Endothelial cell of umbilical vein (primary cell): ENCODE measurements at regions of chr13 and their contacts with region 1.

Region 1: DNA sequence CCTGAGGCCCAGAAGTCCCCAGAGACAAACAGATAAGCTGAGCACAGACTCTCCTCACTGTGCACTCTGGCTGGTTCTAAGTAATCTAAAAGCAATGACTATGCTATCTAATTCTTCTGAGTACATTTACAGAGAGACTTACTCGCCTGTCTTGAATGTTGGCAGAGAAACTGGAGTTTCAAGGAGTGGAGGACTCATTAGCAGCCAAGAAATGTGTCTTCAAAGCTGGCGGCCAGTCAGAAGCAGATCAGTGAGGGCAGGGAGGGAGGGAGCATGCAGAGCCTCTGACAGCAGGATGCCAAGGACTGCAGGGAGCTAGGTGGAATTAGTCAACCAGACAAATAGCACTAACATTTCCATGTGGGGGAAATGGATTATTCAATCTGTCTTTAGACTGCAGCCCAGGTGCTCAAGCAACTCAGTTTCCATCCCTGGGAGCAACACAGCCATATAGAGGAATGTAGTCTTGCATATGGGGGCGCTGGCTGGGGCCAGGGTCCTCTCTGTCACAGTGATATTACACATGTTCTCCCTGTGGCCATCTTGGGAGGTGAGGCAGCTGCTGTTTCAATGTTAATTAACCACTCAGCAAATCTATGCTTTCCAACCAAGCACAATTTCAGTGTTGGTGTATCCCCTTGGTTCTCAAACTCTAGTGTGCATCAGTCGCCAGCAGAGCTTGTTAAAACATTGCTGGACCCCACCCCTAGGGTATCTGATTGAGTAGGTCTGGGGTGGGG is 97.9 kb downstream of the CCNA1 start:
- DNase-seq: peak; percentile 20
- H3K4me3 ChIP-seq: no peak overlapping the region
- H3K27ac ChIP-seq: no peak overlapping the region
- H3K4me1 ChIP-seq: peaks cover 47% of the 10 kb centered on the region
- H3K27me3 ChIP-seq: no peaks in the 10 kb centered on the region
- CTCF ChIP-seq: no peak
- POLR2A ChIP-seq: no peak

Region 2: DNA sequence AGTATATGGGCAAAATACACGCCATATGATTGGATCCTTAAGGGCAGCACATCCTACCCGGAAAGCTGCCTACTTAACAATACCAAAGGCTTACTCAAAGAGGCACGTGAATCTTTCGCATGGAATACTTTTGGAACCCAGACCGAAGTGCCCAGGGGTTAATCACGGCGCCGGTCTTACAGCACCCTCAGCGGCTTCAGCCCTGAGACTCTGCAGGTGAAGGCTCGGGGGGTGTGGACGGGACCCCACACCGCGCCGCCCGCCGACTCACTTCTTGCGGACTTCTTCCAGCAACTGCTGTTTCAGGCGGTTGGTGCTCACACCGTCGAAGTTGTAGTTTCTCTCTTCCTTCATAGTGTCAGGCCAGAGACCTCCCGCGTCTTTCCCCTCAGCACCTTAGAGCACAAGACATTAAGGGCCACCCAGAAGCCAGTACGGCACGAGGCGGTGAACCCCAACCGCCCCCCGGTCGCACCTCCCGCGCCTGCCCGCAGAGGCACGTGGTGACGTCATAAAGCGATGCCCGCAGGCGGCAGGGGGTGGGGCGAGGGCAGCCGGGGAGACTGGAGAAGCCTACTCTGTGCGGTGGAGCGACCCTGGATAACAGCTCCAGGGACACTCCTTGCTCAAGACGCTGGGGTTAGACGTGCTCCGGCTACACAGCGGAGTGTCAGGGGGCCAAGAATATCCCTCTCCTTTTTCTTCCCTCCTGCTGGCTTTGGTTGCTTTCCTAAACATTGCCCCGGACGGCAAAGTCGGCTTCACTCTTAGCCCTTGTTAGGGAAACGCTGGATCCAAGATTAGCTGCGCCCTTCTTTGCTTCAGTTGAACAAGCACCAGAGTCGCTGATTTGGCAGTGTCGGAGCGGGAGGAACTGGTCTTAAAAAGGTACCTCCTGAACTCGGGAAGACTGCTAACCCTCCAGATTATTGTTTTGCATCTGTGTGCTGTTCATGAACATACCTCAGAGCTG is 232.6 kb before region 1 on chr13 and contains the start of gene CCDC169:
- CTCF ChIA-PET with region 1: no interaction called
- POLR2A ChIA-PET with region 1: no interaction called
- dilution Hi-C with region 1: no loop called
- intact Hi-C with region 1: loop called (anchors 5 kb)
- DNase-seq: peak; percentile 85
- H3K4me3 ChIP-seq: peak within 1 kb of the TSS; percentile 31 to 69 (median 59)
- H3K27ac ChIP-seq: peak within 1 kb of the TSS; percentile 17
- H3K4me1 ChIP-seq: peaks cover 18% of the 10 kb centered on the region
- H3K27me3 ChIP-seq: no peaks in the 10 kb centered on the region
- CTCF ChIP-seq: no peak
- POLR2A ChIP-seq: peak; percentile 84
- total RNA-seq, gene CCDC169: 2.5 and 5.3 TPM in 2 replicates

Region 3: GRCh38 chr13:36420437-36420891 is 109.8 kb before region 1 on chr13:
- CTCF ChIA-PET with region 1: no interaction called
- POLR2A ChIA-PET with region 1: no interaction called
- dilution Hi-C with region 1: no loop called
- intact Hi-C with region 1: no loop called
- DNase-seq: peak; percentile 84
- H3K4me3 ChIP-seq: no peak overlapping the region
- H3K27ac ChIP-seq: no peak overlapping the region
- H3K4me1 ChIP-seq: peaks cover 32% of the 10 kb centered on the region
- H3K27me3 ChIP-seq: no peaks in the 10 kb centered on the region
- CTCF ChIP-seq: peak; percentile 86 to 91
- POLR2A ChIP-seq: no peak

Region 4: DNA sequence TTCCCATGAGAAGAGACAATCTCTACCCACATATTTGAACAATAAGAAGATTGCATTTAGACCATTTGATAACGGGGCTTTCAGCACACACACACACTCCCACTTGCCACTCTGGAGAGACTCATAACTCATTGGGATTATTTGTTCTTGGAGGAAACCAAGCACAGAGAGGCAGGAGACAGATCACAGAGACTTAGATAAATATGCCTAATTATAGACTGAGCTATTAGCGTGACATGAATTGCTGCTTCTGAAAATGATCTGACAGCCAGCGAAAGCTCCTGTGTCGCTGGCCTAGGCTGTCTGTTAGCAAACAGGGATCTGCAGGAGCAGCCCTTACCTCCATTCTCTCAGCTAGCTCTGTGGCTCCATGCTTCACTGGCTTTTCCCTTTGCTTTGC is 13.5 kb after region 1 on chr13:
- CTCF ChIA-PET with region 1: interaction called, 28 read pairs
- POLR2A ChIA-PET with region 1: no interaction called
- dilution Hi-C with region 1: no loop called
- intact Hi-C with region 1: no loop called
- DNase-seq: no peak
- H3K4me3 ChIP-seq: no peak overlapping the region
- H3K27ac ChIP-seq: no peak overlapping the region
- H3K4me1 ChIP-seq: no peaks in the 10 kb centered on the region
- H3K27me3 ChIP-seq: peaks cover 4% of the 10 kb centered on the region in 2 experiments
- CTCF ChIP-seq: no peak
- POLR2A ChIP-seq: no peak